Right ventricle myocardium inferior (tissue), 1 donor: ENCODE measurements at regions of chr1 and their contacts with region 1.

Region 1: DNA sequence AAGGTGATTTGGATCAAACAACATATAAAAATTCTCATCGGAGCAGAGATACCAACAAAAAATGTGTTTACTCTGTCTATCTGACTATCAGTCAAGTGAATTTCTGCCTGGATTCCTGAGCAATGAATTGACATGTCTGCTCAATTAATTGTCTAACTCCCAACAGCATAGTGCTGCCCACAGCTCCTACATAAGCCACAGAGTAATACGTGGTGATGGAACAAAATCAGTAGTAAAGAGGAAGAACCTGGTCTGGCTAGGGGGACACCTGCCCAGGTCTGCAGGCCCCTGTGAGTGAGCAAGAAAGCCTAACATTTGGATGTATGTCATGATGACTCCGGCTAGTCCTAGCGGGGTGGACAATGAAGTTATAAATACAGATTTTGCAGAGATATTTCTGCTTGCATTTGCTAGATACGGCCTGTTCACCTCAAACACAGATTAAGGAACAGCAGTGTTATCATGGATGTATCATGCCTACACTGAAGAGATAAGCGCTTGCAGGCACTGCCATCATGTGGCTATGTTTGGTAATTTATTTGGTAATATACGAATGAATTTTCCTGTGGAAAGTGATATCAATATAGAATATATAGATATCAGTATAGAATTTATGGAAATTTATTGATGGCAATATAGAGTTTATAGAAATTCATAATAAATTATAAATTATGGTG is 69.6 kb upstream of the LRRC8B start:
- DNase-seq: no peak
- ATAC-seq: no peak

Region 2: DNA sequence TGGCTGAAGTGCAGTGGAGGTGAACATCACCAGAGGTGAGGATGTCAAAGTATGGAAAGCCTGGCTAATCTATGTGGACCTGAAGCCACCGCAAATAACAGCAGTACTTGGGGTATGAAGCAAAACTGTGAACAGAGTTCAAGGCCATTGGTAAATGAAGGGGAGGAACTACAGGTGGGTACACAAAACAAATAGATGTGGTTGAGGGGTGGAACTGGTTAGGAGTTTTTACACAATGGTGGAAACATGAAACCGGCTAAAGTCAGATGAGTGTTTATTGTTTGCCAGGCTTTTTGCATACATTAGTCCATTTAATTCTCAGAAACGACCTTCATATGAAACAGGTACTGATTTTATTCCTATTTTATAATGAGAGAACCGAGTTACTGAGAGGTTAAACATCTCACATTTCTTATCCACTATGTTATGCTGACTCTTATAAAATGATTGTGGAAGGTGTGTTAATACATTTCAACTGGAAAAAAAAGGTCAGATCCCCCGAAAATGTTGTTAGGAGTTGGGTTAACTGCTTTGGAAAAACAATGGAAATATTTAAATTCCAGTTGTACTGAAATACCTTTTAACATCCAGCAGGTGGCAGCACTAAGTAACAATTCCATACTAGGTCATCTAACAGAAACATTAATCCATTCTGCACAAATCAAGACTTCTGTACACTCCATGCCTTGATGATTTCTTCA is 519.3 kb before region 1 on chr1:
- intact Hi-C with region 1: loop called (anchors 5 kb)
- DNase-seq: no peak
- ATAC-seq: no peak

Region 3: GRCh38 chr1:88998716-88999115 is 456.3 kb before region 1 on chr1:
- intact Hi-C with region 1: loop called (anchors 5 kb)
- DNase-seq: no peak
- ATAC-seq: peak; percentile 79

Region 4: DNA sequence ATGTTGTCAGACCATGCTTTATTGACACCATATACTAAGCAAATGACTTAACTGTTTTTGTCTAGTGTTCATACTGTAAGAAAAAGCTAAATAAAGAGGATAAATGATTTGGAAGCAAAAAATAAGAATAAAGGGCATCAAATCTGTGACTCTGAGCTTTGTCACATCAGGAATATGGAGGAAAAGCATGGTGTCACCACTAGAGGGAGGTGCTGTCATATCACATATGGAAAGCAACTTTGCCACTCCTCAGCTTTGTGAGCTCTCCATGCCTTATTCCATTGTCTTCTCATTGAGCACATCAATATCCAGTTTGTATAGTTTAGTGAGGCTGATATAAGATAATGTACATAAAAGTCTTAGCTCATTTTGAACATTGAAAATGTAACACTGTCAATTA is 369.2 kb before region 1 on chr1:
- intact Hi-C with region 1: loop called (anchors 5 kb)
- DNase-seq: no peak
- ATAC-seq: no peak

Region 5: DNA sequence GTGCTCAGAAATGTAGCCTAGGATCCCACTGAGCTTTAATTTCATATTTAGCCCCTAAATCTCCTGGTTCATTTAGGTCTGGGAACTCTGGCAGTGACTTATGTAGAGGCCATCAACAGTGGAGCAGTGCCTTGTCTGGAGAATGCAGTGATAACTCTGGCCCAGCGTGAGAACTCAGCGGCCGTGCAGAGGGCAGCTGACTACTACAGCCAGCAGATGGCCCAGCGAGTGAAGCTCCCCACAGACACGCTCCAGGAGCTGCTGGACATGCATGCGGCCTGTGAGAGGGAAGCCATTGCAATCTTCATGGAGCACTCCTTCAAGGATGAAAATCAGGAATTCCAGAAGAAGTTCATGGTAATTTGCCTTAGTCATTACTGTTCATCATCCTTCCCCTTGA is 73.4 kb before region 1 on chr1:
- intact Hi-C with region 1: no loop called
- DNase-seq: no peak
- ATAC-seq: no peak